Ascending aorta (tissue), 2 donors: ENCODE measurements at regions of chr17 and their contacts with region 1.

Region 1: GRCh38 chr17:32664936-32665583 is 178.3 kb downstream of the CDK5R1 start:
- DNase-seq: no peak
- H3K4me3 ChIP-seq: no peak overlapping the region
- H3K27ac ChIP-seq: no peak overlapping the region
- H3K4me1 ChIP-seq: no peaks in the 10 kb centered on the region
- H3K27me3 ChIP-seq: no peaks in the 10 kb centered on the region
- CTCF ChIP-seq: no peak

Region 2: DNA sequence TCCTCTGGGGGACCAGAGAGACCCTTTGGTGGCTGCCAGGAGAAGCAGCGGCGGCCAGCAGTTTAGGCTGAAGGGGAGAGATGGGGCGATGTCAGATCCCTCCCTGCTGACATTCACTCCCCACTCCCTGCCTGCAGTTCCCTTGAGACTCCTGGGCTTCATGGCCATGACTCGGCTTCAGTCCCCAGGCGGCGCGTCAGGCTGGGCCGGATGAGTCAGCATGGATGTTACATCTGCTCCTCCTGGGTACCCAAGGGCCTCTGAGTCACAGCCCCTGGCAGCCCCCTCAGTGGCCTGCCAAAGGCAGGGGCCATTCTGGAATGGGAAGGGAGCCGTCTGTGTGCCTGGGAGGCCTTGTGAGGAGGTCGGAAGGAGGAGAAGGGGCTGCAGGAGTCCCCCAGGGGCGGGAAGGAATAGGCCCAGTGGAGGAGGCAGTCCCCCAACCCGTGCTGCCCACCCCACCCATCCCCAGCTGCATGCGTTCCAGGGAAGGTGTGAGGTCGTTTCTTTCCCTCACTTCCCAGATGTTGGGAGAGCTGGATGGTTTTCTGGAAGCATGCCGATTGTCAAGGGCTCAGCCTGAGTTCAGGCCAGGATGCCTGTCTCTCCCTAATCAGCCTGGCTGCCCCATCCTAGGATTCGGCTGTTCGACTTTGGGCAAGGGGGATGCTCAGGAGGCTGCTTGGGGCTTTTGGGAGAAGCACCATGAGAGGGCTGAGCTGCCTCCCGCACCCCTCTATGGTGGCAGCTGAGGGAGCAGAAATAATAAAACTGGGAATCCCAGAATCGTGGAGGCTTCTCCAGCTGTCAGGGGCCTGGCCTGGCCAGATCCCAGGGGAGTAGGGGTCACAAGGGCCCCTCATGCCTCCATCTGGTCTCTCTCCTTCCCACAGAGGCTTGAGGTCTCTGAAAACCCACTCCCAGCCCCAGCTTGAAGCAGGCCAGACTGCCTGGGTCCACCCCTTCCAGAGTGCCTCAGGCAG is 389.7 kb before region 1 on chr17:
- intact Hi-C with region 1: no loop called
- DNase-seq: peak in 1 of 2 donors; percentile 15
- H3K4me3 ChIP-seq: no peak overlapping the region
- H3K27ac ChIP-seq: no peak overlapping the region
- H3K4me1 ChIP-seq: no peaks in the 10 kb centered on the region
- H3K27me3 ChIP-seq: no peaks in the 10 kb centered on the region
- CTCF ChIP-seq: no peak

Region 3: DNA sequence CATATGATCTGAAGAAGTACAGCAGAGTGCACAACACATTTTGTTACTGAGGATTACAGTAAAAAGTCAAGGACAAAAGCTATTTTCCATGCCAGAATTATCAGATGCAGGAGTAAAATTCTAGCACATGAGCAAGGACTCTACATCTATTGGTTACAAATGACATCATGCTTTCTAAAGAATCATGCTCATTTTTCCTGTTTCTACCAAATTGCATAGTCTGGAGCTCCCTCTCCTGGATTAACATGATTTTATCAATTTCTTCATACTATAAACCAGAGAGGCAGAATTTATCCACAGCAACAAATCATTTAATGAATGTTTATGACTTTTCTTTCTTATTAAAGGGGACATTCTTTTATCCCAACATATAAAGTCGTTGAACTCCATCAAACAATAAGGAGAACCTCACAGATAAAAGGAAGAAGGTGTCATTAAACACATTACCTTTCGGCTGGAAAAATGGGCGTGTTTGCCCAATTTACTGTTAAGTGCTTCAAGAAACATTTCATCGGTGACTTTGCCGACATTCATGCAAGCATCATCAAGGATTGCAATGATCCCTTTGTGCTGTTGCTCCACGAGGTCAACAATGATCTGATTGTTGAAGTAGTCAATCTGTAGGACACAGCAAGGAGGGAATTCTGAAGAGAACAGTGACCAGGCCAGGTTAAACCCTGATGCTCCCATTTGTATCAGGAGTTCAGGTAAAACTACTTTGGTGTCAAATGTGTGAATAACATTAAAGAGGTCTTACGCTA is 90.2 kb after region 1 on chr17:
- intact Hi-C with region 1: loop called (anchors 5 kb)
- DNase-seq: no peak
- H3K4me3 ChIP-seq: no peak overlapping the region
- H3K27ac ChIP-seq: no peak overlapping the region
- H3K4me1 ChIP-seq: no peaks in the 10 kb centered on the region
- H3K27me3 ChIP-seq: no peaks in the 10 kb centered on the region
- CTCF ChIP-seq: peak in 2 of 3 experiments; percentile 43 to 54

Region 4: GRCh38 chr17:32909787-32910369 is 244.8 kb after region 1 on chr17:
- intact Hi-C with region 1: loop called (anchors 10 kb)
- DNase-seq: peak in 1 of 2 donors; percentile 93
- H3K4me3 ChIP-seq: no peak overlapping the region
- H3K27ac ChIP-seq: peak overlapping the region in 1 of 2 donors; percentile 13
- H3K4me1 ChIP-seq: peaks cover 0 to 12% of the 10 kb centered on the region in 2 donors
- H3K27me3 ChIP-seq: no peaks in the 10 kb centered on the region
- CTCF ChIP-seq: peak; percentile 66 to 86 (median 79)